CD8-positive, alpha-beta T cell (primary cell): ENCODE measurements at regions of chr5 and their contacts with region 1.

Region 1: GRCh38 chr5:149345147-149345875 is at the start of gene GRPEL2:
- DNase-seq: peak; percentile 65 to 93 (median 84)
- ATAC-seq: peak; percentile 65
- H3K4me3 ChIP-seq: peak within 1 kb of the TSS; percentile 94 to 95
- H3K4me3 Mint-ChIP-seq: peak within 1 kb of the TSS; percentile 92
- H3K27ac ChIP-seq: peak within 1 kb of the TSS; percentile 63 to 88
- H3K27ac Mint-ChIP-seq: peak within 1 kb of the TSS; percentile 90
- H3K4me1 ChIP-seq: peaks cover 53% of the 10 kb centered on the region
- H3K4me1 Mint-ChIP-seq: peaks cover 60% of the 10 kb centered on the region
- H3K27me3 ChIP-seq: no peaks in the 10 kb centered on the region
- H3K27me3 Mint-ChIP-seq: no peaks in the 10 kb centered on the region
- CTCF ChIP-seq: no peak
- total RNA-seq, gene GRPEL2: 9.1 to 9.7 TPM

Region 2: DNA sequence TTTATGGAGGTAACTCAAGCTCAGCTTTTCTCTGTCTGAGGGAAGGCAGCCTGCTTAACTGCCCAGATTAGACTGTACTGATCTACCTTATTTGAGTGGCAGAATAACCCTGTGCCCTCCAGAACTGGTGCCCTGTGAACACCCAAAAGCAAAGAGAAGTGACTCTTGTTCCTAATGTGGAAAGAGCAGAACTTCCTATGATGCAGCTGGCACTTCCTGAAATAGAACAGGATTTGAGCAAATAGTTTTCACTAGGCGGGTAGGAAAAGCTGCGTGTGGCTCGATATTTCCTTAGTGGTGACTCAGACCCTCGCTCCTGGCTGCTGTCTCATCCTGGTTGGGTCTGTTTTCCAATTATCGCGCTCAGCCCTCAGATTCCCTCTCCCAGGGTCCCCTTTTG is 372.4 kb before region 1 on chr5:
- CTCF ChIA-PET with region 1: no interaction called
- POLR2A ChIA-PET with region 1: no interaction called
- intact Hi-C with region 1: no loop called
- DNase-seq: peak in 1 of 9 experiments; percentile 9
- ATAC-seq: no peak
- H3K4me3 ChIP-seq: no peak overlapping the region
- H3K4me3 Mint-ChIP-seq: no peak overlapping the region
- H3K27ac ChIP-seq: no peak overlapping the region
- H3K27ac Mint-ChIP-seq: no peak overlapping the region
- H3K4me1 ChIP-seq: no peaks in the 10 kb centered on the region
- H3K4me1 Mint-ChIP-seq: no peaks in the 10 kb centered on the region
- H3K27me3 ChIP-seq: peaks cover 0 to 3% of the 10 kb centered on the region in 2 experiments
- H3K27me3 Mint-ChIP-seq: peaks cover 9% of the 10 kb centered on the region
- CTCF ChIP-seq: no peak

Region 3: DNA sequence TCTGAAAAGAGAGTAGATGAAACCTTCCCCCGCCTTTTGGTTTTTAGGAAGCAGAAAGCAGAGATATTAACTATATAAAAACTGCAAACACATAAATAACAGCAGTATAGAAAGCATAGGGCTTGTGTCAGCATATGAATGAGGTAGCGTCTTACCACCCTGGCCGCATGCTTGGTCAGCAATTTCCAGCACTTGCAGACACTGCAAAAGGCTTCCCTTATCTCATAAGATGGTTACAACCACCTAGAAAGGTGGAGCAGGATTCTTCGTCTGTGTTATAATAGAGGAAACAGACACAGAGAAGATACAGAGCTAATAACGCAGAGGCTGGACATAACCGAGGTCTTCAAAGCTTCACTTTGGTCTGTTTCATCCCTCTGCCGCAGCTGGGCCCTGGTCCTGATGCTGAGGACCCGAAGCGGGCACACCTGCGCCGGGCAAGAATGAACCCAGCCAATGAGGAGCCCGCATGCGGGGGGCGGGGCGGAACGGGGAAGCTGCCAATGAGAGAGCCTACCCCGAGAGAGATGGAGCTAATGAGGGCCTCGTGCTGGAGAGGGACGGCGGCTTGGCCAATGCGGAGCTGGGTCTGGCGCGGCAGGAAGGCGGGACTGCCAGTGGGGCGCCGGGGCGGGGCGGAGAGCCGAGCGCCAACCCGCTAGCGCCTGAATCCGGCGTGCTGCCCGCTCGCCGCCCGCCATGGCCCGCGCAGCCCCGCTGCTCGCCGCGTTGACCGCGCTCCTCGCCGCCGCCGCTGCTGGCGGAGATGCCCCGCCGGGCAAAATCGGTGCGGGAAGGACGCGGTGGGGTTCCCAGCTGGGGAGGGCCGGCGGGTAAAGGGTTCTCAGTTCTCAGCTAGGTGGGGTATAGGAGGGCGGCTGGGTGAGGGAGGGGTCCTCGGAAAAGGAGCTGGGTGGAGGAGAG is 12.3 kb after region 1 on chr5 and contains the start of gene PCYOX1L:
- CTCF ChIA-PET with region 1: interaction called, 9 read pairs
- POLR2A ChIA-PET with region 1: interaction called, 94 read pairs
- intact Hi-C with region 1: loop called (anchors 1 kb)
- DNase-seq: peak; percentile 89 to 99 (median 95)
- ATAC-seq: peak; percentile 96
- H3K4me3 ChIP-seq: peak within 1 kb of the TSS; percentile 83 to 88
- H3K4me3 Mint-ChIP-seq: peak within 1 kb of the TSS; percentile 93
- H3K27ac ChIP-seq: peak within 1 kb of the TSS; percentile 63 to 74
- H3K27ac Mint-ChIP-seq: peak within 1 kb of the TSS; percentile 92
- H3K4me1 ChIP-seq: peaks cover 37% of the 10 kb centered on the region
- H3K4me1 Mint-ChIP-seq: peaks cover 67% of the 10 kb centered on the region
- H3K27me3 ChIP-seq: no peaks in the 10 kb centered on the region
- H3K27me3 Mint-ChIP-seq: no peaks in the 10 kb centered on the region
- CTCF ChIP-seq: no peak
- total RNA-seq, gene PCYOX1L: 18.9 to 21.9 TPM

Region 4: GRCh38 chr5:149852641-149853330 is 507.5 kb after region 1 on chr5:
- CTCF ChIA-PET with region 1: no interaction called
- POLR2A ChIA-PET with region 1: no interaction called
- intact Hi-C with region 1: no loop called
- DNase-seq: peak in 7 of 9 experiments; percentile 13 to 57 (median 46)
- ATAC-seq: no peak
- H3K4me3 ChIP-seq: no peak overlapping the region
- H3K4me3 Mint-ChIP-seq: no peak overlapping the region
- H3K27ac ChIP-seq: no peak overlapping the region
- H3K27ac Mint-ChIP-seq: no peak overlapping the region
- H3K4me1 ChIP-seq: no peaks in the 10 kb centered on the region
- H3K4me1 Mint-ChIP-seq: no peaks in the 10 kb centered on the region
- H3K27me3 ChIP-seq: no peaks in the 10 kb centered on the region
- H3K27me3 Mint-ChIP-seq: no peaks in the 10 kb centered on the region
- CTCF ChIP-seq: peak; percentile 61